A549 (cell line): ENCODE measurements at regions of chr1 and their contacts with region 1.

Region 1: GRCh38 chr1:22641906-22642636 is 1.4 kb upstream of the C1QC start:
- DNase-seq: peak; percentile 19 to 66
- ATAC-seq: peak; percentile 75 to 93
- H3K4me3 ChIP-seq: no peak overlapping the region
- H3K27ac ChIP-seq: no peak overlapping the region
- H3K4me1 ChIP-seq: 0 out of 3 replicates have a peak, but pooled peaks cover 5% of the 10 kb centered on the region
- CTCF ChIP-seq: peak; percentile 78
- EP300 ChIP-seq: no peak
- POLR2A ChIP-seq: no peak
- RAD21 ChIP-seq: peak; percentile 87 to 94

Region 2: GRCh38 chr1:22426781-22427180 is 215.3 kb before region 1 on chr1:
- CTCF ChIA-PET with region 1: interaction called, 248 read pairs
- POLR2A ChIA-PET with region 1: no interaction called
- DNase-seq: no peak
- ATAC-seq: no peak
- H3K4me3 ChIP-seq: no peak overlapping the region
- H3K27ac ChIP-seq: no peak overlapping the region
- H3K4me1 ChIP-seq: no peaks in the 10 kb centered on the region
- CTCF ChIP-seq: no peak
- EP300 ChIP-seq: no peak
- POLR2A ChIP-seq: no peak
- RAD21 ChIP-seq: no peak

Region 3: DNA sequence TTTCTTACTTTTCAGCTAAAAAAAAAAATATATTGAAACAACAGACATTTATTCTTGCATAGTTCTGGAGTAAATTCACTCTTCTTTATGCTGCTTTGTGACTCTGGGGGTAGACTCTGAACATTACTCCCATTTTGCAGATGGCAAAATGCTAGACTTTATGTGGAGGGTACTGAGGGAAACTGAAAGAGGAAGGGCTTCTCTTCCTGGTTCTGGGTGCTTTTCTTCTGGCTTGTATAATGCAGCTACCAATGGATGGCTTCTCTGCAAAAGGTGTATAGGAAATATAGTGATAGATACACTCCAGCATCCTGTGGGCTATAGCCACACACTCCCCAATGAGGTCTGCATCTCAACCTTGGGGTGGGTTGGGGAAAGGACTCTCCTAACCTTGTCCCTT is 210.1 kb before region 1 on chr1:
- CTCF ChIA-PET with region 1: interaction called, 21 read pairs
- POLR2A ChIA-PET with region 1: no interaction called
- DNase-seq: no peak
- ATAC-seq: no peak
- H3K4me3 ChIP-seq: no peak overlapping the region
- H3K27ac ChIP-seq: no peak overlapping the region
- H3K4me1 ChIP-seq: no peaks in the 10 kb centered on the region
- CTCF ChIP-seq: no peak
- EP300 ChIP-seq: no peak
- POLR2A ChIP-seq: no peak
- RAD21 ChIP-seq: no peak

Region 4: DNA sequence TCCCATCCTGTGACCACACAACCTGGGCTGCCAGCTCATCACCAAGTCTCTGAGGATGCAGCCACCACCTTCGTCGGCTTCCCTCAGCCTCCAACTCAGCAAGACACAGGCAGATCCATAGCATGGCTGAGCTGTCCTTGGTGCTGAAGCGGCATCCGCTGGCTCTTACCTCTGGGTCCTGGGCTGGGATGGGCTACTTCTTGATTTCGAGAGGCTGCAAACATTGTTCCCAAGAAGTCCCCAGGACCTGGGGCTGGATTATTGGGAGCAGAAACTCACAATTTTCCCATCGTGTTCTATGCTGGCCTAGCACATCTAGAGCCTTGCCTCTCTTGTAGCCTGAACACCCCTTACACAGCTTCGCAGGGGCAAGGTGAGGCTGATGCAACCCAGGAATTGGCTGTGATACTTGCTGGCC is 30.5 kb before region 1 on chr1:
- CTCF ChIA-PET with region 1: interaction called, 11 read pairs
- POLR2A ChIA-PET with region 1: no interaction called
- DNase-seq: peak in 1 of 2 experiments; percentile 38
- ATAC-seq: peak; percentile 63 to 77; a peak in 4 of 6 replicates
- H3K4me3 ChIP-seq: no peak overlapping the region
- H3K27ac ChIP-seq: no peak overlapping the region
- H3K4me1 ChIP-seq: no peaks in the 10 kb centered on the region
- CTCF ChIP-seq: no peak
- EP300 ChIP-seq: no peak
- POLR2A ChIP-seq: no peak
- RAD21 ChIP-seq: no peak

Region 5: GRCh38 chr1:22628698-22629446 is 13.2 kb before region 1 on chr1:
- CTCF ChIA-PET with region 1: interaction called, 13 read pairs
- POLR2A ChIA-PET with region 1: no interaction called
- DNase-seq: no peak
- ATAC-seq: no peak
- H3K4me3 ChIP-seq: no peak overlapping the region
- H3K27ac ChIP-seq: no peak overlapping the region
- H3K4me1 ChIP-seq: no peaks in the 10 kb centered on the region
- CTCF ChIP-seq: no peak
- EP300 ChIP-seq: no peak
- POLR2A ChIP-seq: no peak
- RAD21 ChIP-seq: no peak

Region 6: DNA sequence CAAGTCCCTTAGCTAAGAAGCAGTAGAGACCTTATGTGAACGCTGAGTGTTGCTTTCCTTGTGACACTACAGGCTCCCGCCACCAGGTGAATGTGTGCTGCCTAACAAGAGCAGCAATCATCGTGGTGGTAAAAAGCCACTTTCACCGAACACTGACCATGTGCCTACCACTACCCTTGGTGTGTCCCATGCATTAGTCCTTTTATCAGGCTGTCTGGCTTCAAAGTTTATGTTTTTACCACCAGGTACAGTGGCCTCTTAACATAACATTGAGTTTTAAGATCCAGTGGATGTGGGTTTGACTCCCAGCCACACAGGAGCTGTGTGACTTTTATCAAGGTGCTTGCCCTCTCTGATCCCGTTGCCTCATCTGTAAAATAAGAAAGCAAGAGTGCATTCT is 12.6 kb after region 1 on chr1:
- CTCF ChIA-PET with region 1: interaction called, 23 read pairs
- POLR2A ChIA-PET with region 1: no interaction called
- DNase-seq: peak; percentile 25 to 45
- ATAC-seq: peak; percentile 64 to 85; a peak in 4 of 6 replicates
- H3K4me3 ChIP-seq: no peak overlapping the region
- H3K27ac ChIP-seq: no peak overlapping the region
- H3K4me1 ChIP-seq: no peaks in the 10 kb centered on the region
- CTCF ChIP-seq: no peak
- EP300 ChIP-seq: no peak
- POLR2A ChIP-seq: no peak
- RAD21 ChIP-seq: no peak